ENCODE measurements at regions of chr6 and their contacts with region 1.

Region 1: DNA sequence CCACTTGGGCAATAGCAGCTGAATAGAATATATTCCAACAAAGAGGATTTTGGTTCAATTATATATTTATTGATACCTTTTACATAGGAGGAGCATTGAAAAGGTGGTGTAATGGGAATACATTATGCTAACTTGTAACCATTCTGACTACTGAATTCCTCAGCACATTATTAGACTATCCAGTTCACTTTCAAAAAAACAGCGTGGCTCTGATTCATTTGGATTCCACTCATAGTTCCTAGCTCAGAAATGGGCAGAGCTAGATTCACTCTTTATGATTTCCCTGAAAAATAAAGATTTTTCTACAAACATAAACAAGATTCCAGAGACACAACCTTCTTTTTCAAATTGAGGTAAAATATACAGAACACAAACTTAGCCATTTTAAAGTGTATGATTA is 9.2 kb upstream of the TRERF1 start:
- DNase-seq: no peak
- ATAC-seq: no peak

Region 2: GRCh38 chr6:42532038-42532669 is 71.3 kb after region 1 on chr6:
- intact Hi-C with region 1: loop called (anchors 5 kb)
- DNase-seq: no peak
- ATAC-seq: peak; percentile 54

Region 3: DNA sequence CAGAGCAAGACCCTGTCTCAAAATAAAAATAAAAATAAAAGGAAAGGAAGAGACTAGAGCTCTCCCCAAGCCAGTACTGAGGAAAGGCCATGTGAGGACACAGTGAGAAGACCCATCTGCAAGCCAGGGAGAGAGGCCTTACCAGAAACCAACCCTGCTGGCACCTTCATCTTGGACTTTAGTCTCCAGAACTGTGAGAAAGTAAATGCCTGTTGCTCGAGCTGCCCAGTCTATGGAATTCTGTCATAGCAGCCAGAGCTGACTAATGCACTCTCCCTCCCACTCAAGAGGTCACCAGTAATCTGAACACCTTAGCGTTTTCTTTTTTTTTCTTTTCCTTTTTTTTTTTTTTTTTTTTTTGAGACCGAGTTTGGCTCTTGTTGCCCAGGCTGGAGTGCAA is 268.8 kb after region 1 on chr6:
- intact Hi-C with region 1: no loop called
- DNase-seq: no peak
- ATAC-seq: no peak

Measured in left ventricle myocardium superior (tissue), 1 donor.